ENCODE measurements at regions of chr16 and their contacts with region 1.

Region 1: GRCh38 chr16:66934153-66934838 is at the start of gene CIAO2B:
- DNase-seq: peak; percentile 86 to 94 (median 90)
- H3K4me3 ChIP-seq: peak within 1 kb of the TSS; percentile 99
- H3K27ac ChIP-seq: peak within 1 kb of the TSS; percentile 43 to 87
- H3K4me1 ChIP-seq: peaks cover 14% of the 10 kb centered on the region
- H3K27me3 ChIP-seq: no peaks in the 10 kb centered on the region
- CTCF ChIP-seq: peak in 1 of 3 donors; percentile 5
- EP300 ChIP-seq: no peak
- POLR2A ChIP-seq: peak; percentile 91
- total RNA-seq, gene CIAO2B: 57.7 to 77.8 (median 66.7) TPM

Region 2: DNA sequence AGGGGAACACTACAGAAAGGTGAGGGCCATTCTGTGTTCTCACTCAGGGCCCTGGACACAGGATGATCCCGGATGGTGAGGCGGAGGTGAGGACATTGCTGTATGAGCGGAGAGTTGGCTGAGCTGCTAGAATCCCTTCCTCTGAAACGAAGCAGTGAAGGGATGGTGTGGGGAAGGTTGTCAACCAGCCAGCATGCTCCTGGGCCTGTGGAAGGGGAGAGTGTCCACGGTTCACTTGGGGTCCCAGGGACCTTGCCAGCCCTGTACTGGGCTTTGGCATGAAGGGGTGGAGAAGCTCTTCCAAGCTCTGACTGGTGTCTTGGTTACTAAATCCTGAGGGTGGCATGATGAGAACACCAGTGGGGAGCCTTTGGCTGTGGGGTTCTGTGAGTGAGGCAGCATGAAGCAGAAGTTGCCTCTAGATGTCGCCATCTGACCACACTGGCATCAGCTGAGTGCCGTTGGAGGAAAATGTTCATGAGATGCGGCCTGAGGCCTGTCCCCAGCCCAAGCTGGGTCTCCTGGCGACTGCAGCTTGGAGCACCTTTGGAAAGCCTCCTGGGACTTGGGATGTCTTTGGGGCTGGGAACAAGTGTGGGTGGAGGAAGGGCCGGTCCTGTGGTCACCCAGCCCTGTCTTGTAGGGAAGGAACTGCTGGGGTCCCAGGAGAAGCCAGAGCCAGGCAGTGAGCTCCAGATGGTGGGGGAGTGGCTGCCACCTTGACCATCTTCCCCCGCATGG is 39.2 kb before region 1 on chr16:
- intact Hi-C with region 1: loop called in 3 of 4 experiments (anchors 2 to 5 kb)
- DNase-seq: peak; percentile 74 to 82 (median 81)
- H3K4me3 ChIP-seq: no peak overlapping the region
- H3K27ac ChIP-seq: no peak overlapping the region
- H3K4me1 ChIP-seq: peaks cover 19% of the 10 kb centered on the region
- H3K27me3 ChIP-seq: no peaks in the 10 kb centered on the region
- CTCF ChIP-seq: peak; percentile 83 to 84 (median 84)
- EP300 ChIP-seq: no peak
- POLR2A ChIP-seq: no peak

Region 3: DNA sequence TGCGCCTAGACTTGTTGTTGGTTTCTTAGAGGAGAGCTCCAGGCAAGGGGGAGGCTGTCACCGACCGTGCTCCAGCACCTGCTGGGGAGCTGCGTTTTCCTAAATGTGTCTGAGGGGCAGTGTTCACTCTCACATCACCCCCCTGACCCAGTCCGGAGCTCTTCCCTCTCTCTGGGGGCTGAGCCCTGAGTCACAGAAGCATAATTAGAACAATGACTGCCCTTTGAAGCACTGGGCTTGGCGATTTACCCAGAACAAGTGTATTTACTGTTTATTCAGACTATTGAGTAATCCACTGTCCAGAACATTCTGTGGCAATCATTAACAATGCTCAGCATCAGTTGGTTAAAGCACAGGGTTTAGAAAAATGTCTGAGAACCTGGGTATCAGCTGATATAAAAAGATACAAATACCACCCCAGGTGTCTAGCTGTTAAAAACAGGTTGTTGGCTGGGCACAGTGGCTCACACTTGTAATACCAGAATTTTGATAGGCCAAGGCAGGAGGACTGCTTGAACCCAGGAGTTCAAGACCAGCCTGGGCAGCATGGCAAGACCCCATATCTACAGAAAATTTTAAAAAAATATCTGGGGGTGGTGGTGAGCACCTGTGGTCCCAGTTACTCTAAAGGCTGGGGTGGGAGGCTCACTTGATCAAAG is 62.2 kb after region 1 on chr16:
- intact Hi-C with region 1: loop called in 1 of 4 experiments (anchors 10 kb)
- DNase-seq: peak in 3 of 5 donors; percentile 46 to 84 (median 72)
- H3K4me3 ChIP-seq: no peak overlapping the region
- H3K27ac ChIP-seq: peak overlapping the region in 1 of 2 donors; percentile 13
- H3K4me1 ChIP-seq: peaks cover 8% of the 10 kb centered on the region
- H3K27me3 ChIP-seq: no peaks in the 10 kb centered on the region
- CTCF ChIP-seq: no peak
- EP300 ChIP-seq: peak; percentile 45
- POLR2A ChIP-seq: no peak

Region 4: GRCh38 chr16:67459066-67459860 is 525.0 kb after region 1 on chr16:
- intact Hi-C with region 1: loop called in 1 of 4 experiments (anchors 10 kb)
- DNase-seq: peak in 1 of 5 donors; percentile 54
- H3K4me3 ChIP-seq: no peak overlapping the region
- H3K27ac ChIP-seq: peak overlapping the region; percentile 31 to 76
- H3K4me1 ChIP-seq: peaks cover 45% of the 10 kb centered on the region
- H3K27me3 ChIP-seq: no peaks in the 10 kb centered on the region
- CTCF ChIP-seq: no peak
- EP300 ChIP-seq: no peak
- POLR2A ChIP-seq: no peak